Naive thymus-derived CD4-positive, alpha-beta T cell (primary cell): ENCODE measurements at regions of chr1 and their contacts with region 1.

Region 1: GRCh38 chr1:64675718-64676345 is 69.0 kb upstream of the RAVER2 start:
- DNase-seq: peak in 5 of 9 donors; percentile 16 to 29 (median 20)
- ATAC-seq: peak; percentile 57
- H3K4me3 ChIP-seq: no peak overlapping the region
- H3K4me3 Mint-ChIP-seq: no peak overlapping the region
- H3K27ac ChIP-seq: no peak overlapping the region
- H3K27ac Mint-ChIP-seq: peak overlapping the region in 1 of 9 donors; percentile 47
- H3K4me1 ChIP-seq: no peaks in the 10 kb centered on the region
- H3K4me1 Mint-ChIP-seq: peaks cover 0 to 2% (median 0%) of the 10 kb centered on the region in 7 donors
- H3K27me3 ChIP-seq: no peaks in the 10 kb centered on the region
- H3K27me3 Mint-ChIP-seq: peaks cover 0 to under 1% (median 0%) of the 10 kb centered on the region in 5 donors

Region 2: GRCh38 chr1:63537940-63538339 is 1137.9 kb before region 1 on chr1:
- CTCF ChIA-PET with region 1: no interaction called
- POLR2A ChIA-PET with region 1: no interaction called
- intact Hi-C with region 1: no loop called
- DNase-seq: peak in 3 of 9 donors; percentile 2 to 28 (median 19)
- ATAC-seq: no peak
- H3K4me3 ChIP-seq: no peak overlapping the region
- H3K4me3 Mint-ChIP-seq: no peak overlapping the region
- H3K27ac ChIP-seq: no peak overlapping the region
- H3K27ac Mint-ChIP-seq: no peak overlapping the region
- H3K4me1 ChIP-seq: no peaks in the 10 kb centered on the region
- H3K4me1 Mint-ChIP-seq: no peaks in the 10 kb centered on the region
- H3K27me3 ChIP-seq: no peaks in the 10 kb centered on the region
- H3K27me3 Mint-ChIP-seq: no peaks in the 10 kb centered on the region

Region 3: GRCh38 chr1:64268653-64269557 is 406.9 kb before region 1 on chr1:
- CTCF ChIA-PET with region 1: interaction called, 18 read pairs
- POLR2A ChIA-PET with region 1: no interaction called
- intact Hi-C with region 1: loop called (anchors 1 kb)
- DNase-seq: peak; percentile 30 to 74 (median 62)
- ATAC-seq: peak; percentile 75
- H3K4me3 ChIP-seq: no peak overlapping the region
- H3K4me3 Mint-ChIP-seq: no peak overlapping the region
- H3K27ac ChIP-seq: no peak overlapping the region
- H3K27ac Mint-ChIP-seq: no peak overlapping the region
- H3K4me1 ChIP-seq: no peaks in the 10 kb centered on the region
- H3K4me1 Mint-ChIP-seq: no peaks in the 10 kb centered on the region
- H3K27me3 ChIP-seq: no peaks in the 10 kb centered on the region
- H3K27me3 Mint-ChIP-seq: peaks cover 3 to 18% (median 10%) of the 10 kb centered on the region in 5 donors

Region 4: GRCh38 chr1:64499966-64500365 is 175.9 kb before region 1 on chr1:
- CTCF ChIA-PET with region 1: interaction called, 5 read pairs
- POLR2A ChIA-PET with region 1: no interaction called
- intact Hi-C with region 1: loop called in 1 of 2 experiments (anchors 1 kb)
- DNase-seq: peak in 4 of 9 donors; percentile 16 to 38 (median 32)
- ATAC-seq: peak; percentile 57
- H3K4me3 ChIP-seq: no peak overlapping the region
- H3K4me3 Mint-ChIP-seq: no peak overlapping the region
- H3K27ac ChIP-seq: no peak overlapping the region
- H3K27ac Mint-ChIP-seq: peak overlapping the region in 1 of 9 donors; percentile 1
- H3K4me1 ChIP-seq: peaks cover 0 to 5% of the 10 kb centered on the region in 2 donors
- H3K4me1 Mint-ChIP-seq: peaks cover 0 to 75% (median 13%) of the 10 kb centered on the region in 7 donors
- H3K27me3 ChIP-seq: no peaks in the 10 kb centered on the region
- H3K27me3 Mint-ChIP-seq: peaks cover 0 to 16% (median 3%) of the 10 kb centered on the region in 5 donors

Region 5: DNA sequence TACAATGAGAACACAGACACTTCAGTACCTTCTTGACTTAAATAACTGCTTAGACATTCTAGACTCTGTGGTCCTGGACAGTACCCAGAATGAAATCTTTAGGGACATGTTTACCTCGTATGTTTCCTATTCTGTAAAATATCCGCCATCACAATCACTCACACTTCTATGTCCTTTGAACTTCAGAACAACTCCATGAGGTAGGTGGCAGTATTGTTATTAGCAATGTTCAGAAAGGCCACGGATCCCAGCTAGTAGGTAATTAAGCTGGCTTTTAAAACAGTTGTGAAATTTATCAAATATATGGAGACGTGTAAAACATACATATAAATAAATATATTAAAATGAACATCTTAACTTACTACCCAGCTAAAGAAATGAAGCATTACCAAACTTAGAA is 122.6 kb before region 1 on chr1:
- CTCF ChIA-PET with region 1: interaction called, 24 read pairs
- POLR2A ChIA-PET with region 1: no interaction called
- intact Hi-C with region 1: loop called in 1 of 2 experiments (anchors 1 kb)
- DNase-seq: peak in 2 of 9 donors; percentile 12 to 16
- ATAC-seq: no peak
- H3K4me3 ChIP-seq: no peak overlapping the region
- H3K4me3 Mint-ChIP-seq: peak overlapping the region in 3 of 10 donors; percentile 6 to 18 (median 18)
- H3K27ac ChIP-seq: no peak overlapping the region
- H3K27ac Mint-ChIP-seq: peak overlapping the region in 7 of 9 donors; percentile 4 to 91 (median 70)
- H3K4me1 ChIP-seq: peaks cover 0 to 25% of the 10 kb centered on the region in 2 donors
- H3K4me1 Mint-ChIP-seq: peaks cover 20 to 81% (median 57%) of the 10 kb centered on the region in 7 donors
- H3K27me3 ChIP-seq: no peaks in the 10 kb centered on the region
- H3K27me3 Mint-ChIP-seq: peaks cover 0 to 57% (median 0%) of the 10 kb centered on the region in 5 donors

Region 6: GRCh38 chr1:65027666-65028358 is 352.0 kb after region 1 on chr1:
- CTCF ChIA-PET with region 1: no interaction called
- POLR2A ChIA-PET with region 1: no interaction called
- intact Hi-C with region 1: loop called in 1 of 2 experiments (anchors 5 kb)
- DNase-seq: no peak
- ATAC-seq: no peak
- H3K4me3 ChIP-seq: no peak overlapping the region
- H3K4me3 Mint-ChIP-seq: no peak overlapping the region
- H3K27ac ChIP-seq: no peak overlapping the region
- H3K27ac Mint-ChIP-seq: no peak overlapping the region
- H3K4me1 ChIP-seq: peaks cover 0 to 5% of the 10 kb centered on the region in 2 donors
- H3K4me1 Mint-ChIP-seq: peaks cover 0 to 31% (median 18%) of the 10 kb centered on the region in 7 donors
- H3K27me3 ChIP-seq: no peaks in the 10 kb centered on the region
- H3K27me3 Mint-ChIP-seq: peaks cover 0 to 8% (median 0%) of the 10 kb centered on the region in 5 donors